K562 (cell line): ENCODE measurements at regions of chr22 and their contacts with region 1.

Region 1: DNA sequence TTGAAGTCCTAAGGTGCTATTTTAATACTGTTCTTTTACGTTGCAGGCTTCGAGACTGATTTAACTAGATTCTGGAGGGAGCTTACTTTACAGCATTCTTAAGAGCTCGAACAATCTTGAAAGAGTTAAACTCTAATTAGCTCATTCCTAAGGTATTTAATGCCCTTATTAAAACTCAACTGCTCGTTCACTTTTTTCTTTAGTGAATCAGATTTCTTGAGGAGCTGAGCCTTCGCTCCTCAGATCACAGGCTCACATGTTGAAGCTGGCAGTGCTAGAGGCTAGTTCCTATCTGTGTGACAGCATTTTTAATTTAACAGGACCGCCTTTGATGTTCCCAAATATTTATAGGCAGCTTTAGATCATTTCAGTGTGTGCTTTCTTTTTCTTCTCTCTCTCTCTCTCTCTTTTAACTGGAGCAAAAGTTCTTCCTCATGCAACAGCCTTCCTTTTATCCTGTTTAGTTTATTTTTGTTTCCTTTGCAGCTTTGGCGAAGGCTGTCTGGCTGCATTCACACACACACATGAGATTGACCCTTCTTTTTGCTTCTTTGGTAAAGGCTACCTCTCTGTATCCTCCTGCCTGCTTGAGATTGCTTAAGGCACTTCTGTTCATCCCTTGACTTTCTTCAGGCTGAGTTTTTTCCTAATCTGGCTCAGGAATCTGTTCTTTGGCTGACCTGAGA is 21.0 kb downstream of the ZNRF3 start:
- DNase-seq: no peak
- ATAC-seq: no peak
- H3K4me3 ChIP-seq: no peak overlapping the region
- H3K27ac ChIP-seq: no peak overlapping the region
- H3K4me1 ChIP-seq: peaks cover 0 to 3% of the 10 kb centered on the region in 2 experiments; a peak in 2 of 5 replicates
- H3K27me3 ChIP-seq: no peaks in the 10 kb centered on the region
- CTCF ChIP-seq: no peak
- EP300 ChIP-seq: no peak
- POLR2A ChIP-seq: no peak
- RAD21 ChIP-seq: no peak

Region 2: DNA sequence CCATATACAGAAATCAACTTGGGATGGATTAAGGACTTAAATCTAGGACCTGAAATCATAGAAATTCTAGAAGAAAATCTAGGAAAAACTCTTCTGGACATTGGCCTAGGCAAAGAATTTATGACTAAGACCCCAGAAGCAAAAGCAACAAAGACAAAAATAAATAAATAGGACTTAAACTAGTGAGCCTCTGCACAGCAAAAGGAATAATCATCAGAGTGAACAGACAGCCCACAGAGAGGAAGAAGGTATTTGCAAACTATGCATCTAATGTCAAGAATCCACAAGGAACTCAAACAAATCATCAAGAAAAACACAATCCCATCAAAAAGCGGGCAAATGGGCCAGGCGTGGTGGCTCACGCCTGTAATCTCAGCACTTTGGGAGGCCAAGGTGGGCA is 257.1 kb before region 1 on chr22:
- CTCF ChIA-PET with region 1: no interaction called
- POLR2A ChIA-PET with region 1: no interaction called
- in situ Hi-C with region 1: no loop called
- intact Hi-C with region 1: no loop called
- DNase-seq: no peak
- ATAC-seq: no peak
- H3K4me3 ChIP-seq: no peak overlapping the region
- H3K27ac ChIP-seq: no peak overlapping the region
- H3K4me1 ChIP-seq: no peaks in the 10 kb centered on the region; a peak in 2 of 5 replicates
- H3K27me3 ChIP-seq: no peaks in the 10 kb centered on the region
- CTCF ChIP-seq: no peak
- EP300 ChIP-seq: no peak
- POLR2A ChIP-seq: no peak
- RAD21 ChIP-seq: no peak

Region 3: GRCh38 chr22:28864878-28865596 is 39.3 kb before region 1 on chr22:
- CTCF ChIA-PET with region 1: no interaction called
- POLR2A ChIA-PET with region 1: no interaction called
- in situ Hi-C with region 1: no loop called
- intact Hi-C with region 1: no loop called
- DNase-seq: no peak
- ATAC-seq: no peak
- H3K4me3 ChIP-seq: no peak overlapping the region
- H3K27ac ChIP-seq: no peak overlapping the region
- H3K4me1 ChIP-seq: no peaks in the 10 kb centered on the region
- H3K27me3 ChIP-seq: no peaks in the 10 kb centered on the region
- CTCF ChIP-seq: no peak
- EP300 ChIP-seq: no peak
- POLR2A ChIP-seq: no peak
- RAD21 ChIP-seq: no peak

Region 4: DNA sequence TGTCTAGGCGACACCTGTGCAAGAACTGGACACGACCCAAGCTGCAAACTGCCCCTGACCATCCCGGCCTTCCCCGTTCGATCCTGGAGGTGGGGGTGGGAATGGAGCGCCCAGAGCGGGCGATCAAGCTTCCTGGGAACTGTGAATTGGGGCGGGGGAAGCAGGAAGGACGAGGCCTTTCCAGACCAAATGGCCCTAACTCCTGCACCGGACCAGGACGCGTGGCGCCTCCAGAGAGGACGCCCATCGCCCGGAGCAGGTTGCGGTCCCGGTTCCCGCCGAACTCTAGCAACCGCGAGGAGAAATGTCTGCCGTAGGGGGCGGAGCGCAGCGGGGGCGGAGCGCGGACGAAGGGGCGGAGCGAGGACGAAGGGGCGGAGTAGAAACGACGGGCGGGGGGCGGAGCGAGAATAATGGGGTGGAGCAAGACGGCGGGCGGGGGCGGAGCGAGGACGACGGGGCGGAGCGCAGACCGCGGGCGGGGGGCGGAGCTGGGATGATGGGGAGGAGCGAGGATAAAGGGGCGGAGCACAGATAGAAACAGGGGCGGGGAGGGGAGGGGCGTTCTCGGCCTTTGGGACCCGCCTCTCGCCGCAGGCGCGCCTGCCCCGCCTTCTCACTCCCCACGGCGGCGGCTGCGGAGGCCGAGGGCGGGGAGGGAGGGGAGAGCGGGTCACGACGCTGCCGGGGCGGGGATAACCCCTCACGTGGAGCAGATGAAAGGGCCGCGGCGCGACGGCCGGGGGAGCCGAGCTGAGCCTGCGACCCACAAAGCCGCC is 21.3 kb before region 1 on chr22 and contains the start of gene ZNRF3:
- CTCF ChIA-PET with region 1: no interaction called
- POLR2A ChIA-PET with region 1: no interaction called
- in situ Hi-C with region 1: no loop called
- intact Hi-C with region 1: no loop called
- DNase-seq: peak; percentile 89 to 92 (median 91)
- ATAC-seq: peak; percentile 92
- H3K4me3 ChIP-seq: peak within 1 kb of the TSS; percentile 56
- H3K27ac ChIP-seq: peak within 1 kb of the TSS; percentile 85
- H3K4me1 ChIP-seq: peaks cover 16 to 21% of the 10 kb centered on the region in 2 experiments; a peak in 4 of 5 replicates
- H3K27me3 ChIP-seq: no peaks in the 10 kb centered on the region
- CTCF ChIP-seq: no peak
- EP300 ChIP-seq: no peak
- POLR2A ChIP-seq: peak; percentile 87
- RAD21 ChIP-seq: no peak
- polyA plus RNA-seq, gene ZNRF3: 0.41 to 0.58 TPM

Region 5: GRCh38 chr22:28894334-28894733 is 10.0 kb before region 1 on chr22:
- CTCF ChIA-PET with region 1: no interaction called
- POLR2A ChIA-PET with region 1: interaction called, 11 read pairs
- in situ Hi-C with region 1: no loop called
- intact Hi-C with region 1: no loop called
- DNase-seq: no peak
- ATAC-seq: no peak
- H3K4me3 ChIP-seq: no peak overlapping the region
- H3K27ac ChIP-seq: no peak overlapping the region
- H3K4me1 ChIP-seq: peaks cover 0 to 6% of the 10 kb centered on the region in 2 experiments; a peak in 2 of 5 replicates
- H3K27me3 ChIP-seq: no peaks in the 10 kb centered on the region
- CTCF ChIP-seq: no peak
- EP300 ChIP-seq: no peak
- POLR2A ChIP-seq: no peak
- RAD21 ChIP-seq: no peak

Region 6: GRCh38 chr22:29128891-29129807 is 224.8 kb after region 1 on chr22:
- CTCF ChIA-PET with region 1: no interaction called
- POLR2A ChIA-PET with region 1: no interaction called
- in situ Hi-C with region 1: no loop called
- intact Hi-C with region 1: no loop called
- DNase-seq: peak in 1 of 4 experiments; percentile 25
- ATAC-seq: peak; percentile 43
- H3K4me3 ChIP-seq: no peak overlapping the region
- H3K27ac ChIP-seq: peak overlapping the region; percentile 42; the same call in 2 of the 3 replicates
- H3K4me1 ChIP-seq: peaks cover 4 to 15% of the 10 kb centered on the region in 2 experiments; a peak in 2 of 5 replicates
- H3K27me3 ChIP-seq: no peaks in the 10 kb centered on the region
- CTCF ChIP-seq: no peak
- EP300 ChIP-seq: no peak
- POLR2A ChIP-seq: no peak
- RAD21 ChIP-seq: no peak